ENCODE measurements at regions of chr11 and their contacts with region 1.

Region 1: DNA sequence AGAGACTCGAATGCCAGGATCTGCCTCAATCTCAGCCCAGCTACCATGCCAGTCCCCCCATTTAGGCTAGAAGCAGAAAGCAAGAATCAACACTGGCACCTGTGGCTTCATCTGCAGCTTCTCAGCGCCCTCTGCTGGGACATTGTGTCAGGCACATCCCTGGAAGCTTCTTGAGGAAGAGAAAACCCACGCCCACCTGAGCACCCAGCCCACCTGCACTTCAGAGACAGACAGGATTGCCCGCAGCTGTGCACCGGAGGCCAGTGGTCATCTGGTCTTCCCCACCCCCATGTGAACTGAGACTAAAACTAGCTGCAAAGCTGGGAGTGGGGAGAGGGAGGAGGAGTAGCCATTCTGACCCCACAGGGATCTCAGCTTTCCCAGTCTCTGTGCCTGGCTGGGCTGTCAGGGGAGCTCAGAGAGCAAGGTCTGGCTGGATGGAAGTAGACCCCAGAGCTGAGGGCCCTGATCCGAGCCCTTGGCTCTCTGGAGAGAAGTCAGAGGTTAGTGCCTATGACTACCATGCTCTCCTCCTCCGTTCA is 66.8 kb downstream of the FEZ1 start:
- DNase-seq: peak; percentile 59
- H3K4me3 ChIP-seq: no peak overlapping the region
- H3K27ac ChIP-seq: no peak overlapping the region
- H3K4me1 ChIP-seq: no peaks in the 10 kb centered on the region
- H3K27me3 ChIP-seq: no peaks in the 10 kb centered on the region
- CTCF ChIP-seq: peak; percentile 70 to 81
- POLR2A ChIP-seq: no peak

Region 2: DNA sequence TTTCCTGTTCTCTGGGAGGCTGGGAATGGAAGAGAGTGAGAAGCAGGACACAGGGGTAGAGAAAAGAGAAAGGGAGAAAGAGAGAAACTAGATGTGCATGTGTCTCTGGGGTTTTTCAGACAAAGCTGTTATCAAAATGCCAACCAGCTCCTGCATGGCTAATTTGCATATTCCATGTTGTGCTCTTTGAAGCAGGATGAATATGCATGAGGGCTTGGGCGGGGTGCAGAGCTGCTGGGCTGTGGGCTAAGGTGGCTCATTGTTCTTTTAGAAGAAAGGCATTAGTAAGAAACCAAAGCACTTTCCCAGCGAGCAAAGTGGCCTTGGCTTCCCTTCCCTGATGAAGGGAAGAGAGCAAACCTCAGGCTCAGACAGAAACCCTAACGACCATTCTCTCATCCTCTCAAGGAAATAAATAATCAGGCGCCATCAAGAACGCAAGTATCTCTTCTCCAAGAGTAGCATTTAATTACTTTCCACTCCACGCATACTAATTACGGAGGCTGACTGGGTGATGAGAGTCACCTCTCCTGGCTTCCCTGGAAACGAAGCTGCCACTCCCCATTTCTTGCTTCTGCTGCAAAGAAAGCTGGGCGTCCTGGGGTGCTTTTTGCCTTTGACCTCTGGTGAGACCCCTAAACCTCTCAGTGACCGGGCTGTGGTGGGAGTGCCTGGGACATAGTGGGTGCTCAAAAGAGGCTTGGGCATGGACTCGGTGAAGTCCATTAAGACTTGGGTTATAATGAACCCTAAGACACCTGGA is 12.6 kb after region 1 on chr11:
- CTCF ChIA-PET with region 1: interaction called, 31 read pairs
- POLR2A ChIA-PET with region 1: no interaction called
- dilution Hi-C with region 1: no loop called
- intact Hi-C with region 1: no loop called
- DNase-seq: no peak
- H3K4me3 ChIP-seq: no peak overlapping the region
- H3K27ac ChIP-seq: no peak overlapping the region
- H3K4me1 ChIP-seq: no peaks in the 10 kb centered on the region
- H3K27me3 ChIP-seq: peaks cover 0 to 12% of the 10 kb centered on the region in 2 experiments
- CTCF ChIP-seq: no peak
- POLR2A ChIP-seq: no peak

Region 3: DNA sequence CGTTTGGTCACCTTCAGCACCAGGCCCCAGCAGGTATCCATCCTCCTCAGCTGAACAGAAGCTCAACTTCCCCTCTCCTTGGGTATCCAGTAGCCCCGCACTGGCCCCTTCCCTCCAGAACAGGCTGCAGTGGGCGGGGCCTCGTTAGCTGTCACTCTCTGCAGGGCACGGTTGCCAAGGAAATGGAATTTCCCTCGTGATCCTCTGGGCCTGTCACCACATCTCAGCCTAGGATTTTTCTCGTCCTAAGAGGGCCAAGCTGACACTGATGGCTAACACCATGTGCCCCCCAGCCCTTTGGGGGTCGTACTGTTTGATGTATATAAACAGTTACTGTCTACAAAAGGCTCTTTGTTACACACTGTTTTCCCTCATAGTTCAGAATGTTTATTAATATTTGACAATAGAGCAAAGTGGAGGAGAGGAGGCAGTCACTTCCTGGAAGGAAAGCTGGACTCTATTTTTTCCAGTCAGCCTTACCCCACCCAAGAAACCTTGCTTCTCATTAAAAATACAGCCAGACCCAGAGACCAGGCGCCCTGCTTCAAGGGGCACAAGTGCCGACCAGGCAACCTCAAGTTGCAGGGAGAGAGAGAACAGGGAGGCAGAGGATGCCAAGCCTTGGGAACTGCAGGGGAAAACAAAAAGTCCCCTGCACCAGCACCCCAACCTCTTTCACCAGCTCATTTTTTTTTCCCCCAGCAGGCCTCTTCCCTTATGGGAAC is 22.3 kb after region 1 on chr11:
- CTCF ChIA-PET with region 1: interaction called, 10 read pairs
- POLR2A ChIA-PET with region 1: no interaction called
- dilution Hi-C with region 1: no loop called
- intact Hi-C with region 1: no loop called
- DNase-seq: peak; percentile 67
- H3K4me3 ChIP-seq: no peak overlapping the region
- H3K27ac ChIP-seq: peak overlapping the region; percentile 29
- H3K4me1 ChIP-seq: peaks cover 7% of the 10 kb centered on the region
- H3K27me3 ChIP-seq: no peaks in the 10 kb centered on the region
- CTCF ChIP-seq: no peak
- POLR2A ChIP-seq: no peak